ENCODE measurements at regions of chr7 and their contacts with region 1.

Region 1: GRCh38 chr7:103296901-103297836 is at the start of gene PMPCB:
- DNase-seq: peak; percentile 93 to 98 (median 96)
- ATAC-seq: peak; percentile 99
- H3K4me3 ChIP-seq: peak within 1 kb of the TSS; percentile 80
- H3K4me3 Mint-ChIP-seq: peak within 1 kb of the TSS; percentile 94
- H3K27ac ChIP-seq: peak within 1 kb of the TSS; percentile 80 to 87
- H3K27ac Mint-ChIP-seq: peak within 1 kb of the TSS; percentile 85
- H3K4me1 ChIP-seq: peaks cover 20% of the 10 kb centered on the region
- H3K4me1 Mint-ChIP-seq: peaks cover 42% of the 10 kb centered on the region
- H3K27me3 ChIP-seq: no peaks in the 10 kb centered on the region
- H3K27me3 Mint-ChIP-seq: no peaks in the 10 kb centered on the region
- CTCF ChIP-seq: peak; percentile 88
- total RNA-seq, gene PMPCB: 101 to 103 TPM

Region 2: GRCh38 chr7:103344453-103345149 is 47.4 kb after region 1 on chr7 and contains the start of gene DNAJC2:
- CTCF ChIA-PET with region 1: interaction called, 4 read pairs
- POLR2A ChIA-PET with region 1: interaction called, 6 read pairs
- intact Hi-C with region 1: loop called (anchors 1 to 2 kb)
- DNase-seq: peak; percentile 74 to 95 (median 78)
- ATAC-seq: peak; percentile 86
- H3K4me3 ChIP-seq: peak within 1 kb of the TSS; percentile 94
- H3K4me3 Mint-ChIP-seq: peak within 1 kb of the TSS; percentile 97
- H3K27ac ChIP-seq: peak within 1 kb of the TSS; percentile 73 to 82
- H3K27ac Mint-ChIP-seq: peak within 1 kb of the TSS; percentile 85
- H3K4me1 ChIP-seq: peaks cover 28% of the 10 kb centered on the region
- H3K4me1 Mint-ChIP-seq: peaks cover 76% of the 10 kb centered on the region
- H3K27me3 ChIP-seq: no peaks in the 10 kb centered on the region
- H3K27me3 Mint-ChIP-seq: no peaks in the 10 kb centered on the region
- CTCF ChIP-seq: no peak
- total RNA-seq, gene DNAJC2: 72.0 to 77.4 TPM

Region 3: DNA sequence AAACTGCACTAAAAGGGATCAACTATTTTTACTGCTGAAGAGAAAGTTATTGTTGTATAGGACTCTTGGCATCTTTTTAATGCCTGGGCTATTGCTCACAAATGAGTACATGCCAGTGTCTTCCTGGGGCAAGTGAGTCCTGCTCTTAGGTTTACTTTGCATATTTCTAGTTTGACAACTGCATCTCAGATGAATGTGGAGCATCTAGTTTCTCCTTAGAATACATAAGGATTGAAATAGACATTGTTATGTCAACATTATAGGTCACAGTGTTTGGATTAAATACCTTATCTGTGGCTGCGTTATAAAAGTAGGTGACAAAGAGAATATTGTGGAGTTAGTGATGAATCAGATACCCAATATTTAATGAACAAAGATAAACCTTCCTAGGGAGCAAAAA is 94.8 kb after region 1 on chr7:
- CTCF ChIA-PET with region 1: no interaction called
- POLR2A ChIA-PET with region 1: no interaction called
- intact Hi-C with region 1: no loop called
- DNase-seq: no peak
- ATAC-seq: no peak
- H3K4me3 ChIP-seq: no peak overlapping the region
- H3K4me3 Mint-ChIP-seq: no peak overlapping the region
- H3K27ac ChIP-seq: no peak overlapping the region
- H3K27ac Mint-ChIP-seq: no peak overlapping the region
- H3K4me1 ChIP-seq: no peaks in the 10 kb centered on the region
- H3K4me1 Mint-ChIP-seq: no peaks in the 10 kb centered on the region
- H3K27me3 ChIP-seq: peaks cover 3 to 4% of the 10 kb centered on the region in 2 experiments
- H3K27me3 Mint-ChIP-seq: peaks cover 12% of the 10 kb centered on the region
- CTCF ChIP-seq: no peak

Region 4: GRCh38 chr7:103412151-103412550 is 115.0 kb after region 1 on chr7:
- CTCF ChIA-PET with region 1: no interaction called
- POLR2A ChIA-PET with region 1: no interaction called
- intact Hi-C with region 1: loop called (anchors 1 to 2 kb)
- DNase-seq: no peak
- ATAC-seq: no peak
- H3K4me3 ChIP-seq: no peak overlapping the region
- H3K4me3 Mint-ChIP-seq: no peak overlapping the region
- H3K27ac ChIP-seq: no peak overlapping the region
- H3K27ac Mint-ChIP-seq: no peak overlapping the region
- H3K4me1 ChIP-seq: no peaks in the 10 kb centered on the region
- H3K4me1 Mint-ChIP-seq: no peaks in the 10 kb centered on the region
- H3K27me3 ChIP-seq: peaks cover 0 to 3% of the 10 kb centered on the region in 2 experiments
- H3K27me3 Mint-ChIP-seq: peaks cover 4% of the 10 kb centered on the region
- CTCF ChIP-seq: no peak

Region 5: GRCh38 chr7:104156842-104157277 is 859.7 kb after region 1 on chr7:
- CTCF ChIA-PET with region 1: no interaction called
- POLR2A ChIA-PET with region 1: no interaction called
- intact Hi-C with region 1: loop called (anchors 5 to 10 kb)
- DNase-seq: peak in 2 of 14 experiments; percentile 1 to 10
- ATAC-seq: no peak
- H3K4me3 ChIP-seq: no peak overlapping the region
- H3K4me3 Mint-ChIP-seq: no peak overlapping the region
- H3K27ac ChIP-seq: no peak overlapping the region
- H3K27ac Mint-ChIP-seq: no peak overlapping the region
- H3K4me1 ChIP-seq: no peaks in the 10 kb centered on the region
- H3K4me1 Mint-ChIP-seq: peaks cover 11% of the 10 kb centered on the region
- H3K27me3 ChIP-seq: no peaks in the 10 kb centered on the region
- H3K27me3 Mint-ChIP-seq: no peaks in the 10 kb centered on the region
- CTCF ChIP-seq: peak; percentile 54

Region 6: DNA sequence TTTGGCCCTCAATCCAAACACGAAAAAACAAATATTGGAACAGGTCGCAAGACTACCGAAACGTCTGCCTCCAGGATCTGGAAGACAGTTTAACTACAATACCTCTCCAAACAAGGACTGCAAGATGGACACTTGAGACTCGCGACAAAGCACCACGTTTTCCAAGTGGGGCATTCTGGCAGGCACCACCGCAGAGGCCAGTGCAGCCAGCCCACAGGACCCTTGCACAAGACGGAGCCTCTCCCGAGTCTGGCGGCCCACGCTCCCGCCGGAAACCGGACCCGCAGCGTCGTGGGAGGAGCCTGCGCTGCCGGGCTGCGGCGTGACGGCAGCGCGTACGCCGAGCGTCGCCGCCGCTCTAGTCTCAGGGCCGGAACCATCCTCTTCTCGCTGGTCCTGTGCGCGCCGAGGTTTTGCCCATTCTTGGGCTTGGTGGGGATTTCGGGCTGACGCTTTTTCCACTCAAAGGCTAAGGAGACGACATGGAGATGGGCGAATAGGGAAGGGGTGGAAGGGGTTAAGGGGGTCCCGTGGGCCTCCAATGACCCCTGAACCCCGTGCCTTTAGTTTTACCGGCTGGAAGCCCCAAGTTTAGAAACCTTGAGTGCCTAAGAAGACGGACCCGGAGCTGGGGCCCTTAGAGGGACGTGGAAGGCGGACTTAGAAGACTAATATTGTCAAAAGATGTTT is 910.7 kb after region 1 on chr7 and contains the start of gene ORC5:
- CTCF ChIA-PET with region 1: no interaction called
- POLR2A ChIA-PET with region 1: no interaction called
- intact Hi-C with region 1: loop called in 1 of 2 experiments (anchors 10 kb)
- DNase-seq: peak; percentile 53 to 89 (median 66)
- ATAC-seq: peak; percentile 97
- H3K4me3 ChIP-seq: peak within 1 kb of the TSS; percentile 92
- H3K4me3 Mint-ChIP-seq: peak within 1 kb of the TSS; percentile 97
- H3K27ac ChIP-seq: peak within 1 kb of the TSS; percentile 58 to 77
- H3K27ac Mint-ChIP-seq: peak within 1 kb of the TSS; percentile 94
- H3K4me1 ChIP-seq: peaks cover 20% of the 10 kb centered on the region
- H3K4me1 Mint-ChIP-seq: peaks cover 46% of the 10 kb centered on the region
- H3K27me3 ChIP-seq: no peaks in the 10 kb centered on the region
- H3K27me3 Mint-ChIP-seq: peaks cover 17% of the 10 kb centered on the region
- CTCF ChIP-seq: no peak
- total RNA-seq, gene ORC5: 7.7 to 9.3 TPM

Region 7: DNA sequence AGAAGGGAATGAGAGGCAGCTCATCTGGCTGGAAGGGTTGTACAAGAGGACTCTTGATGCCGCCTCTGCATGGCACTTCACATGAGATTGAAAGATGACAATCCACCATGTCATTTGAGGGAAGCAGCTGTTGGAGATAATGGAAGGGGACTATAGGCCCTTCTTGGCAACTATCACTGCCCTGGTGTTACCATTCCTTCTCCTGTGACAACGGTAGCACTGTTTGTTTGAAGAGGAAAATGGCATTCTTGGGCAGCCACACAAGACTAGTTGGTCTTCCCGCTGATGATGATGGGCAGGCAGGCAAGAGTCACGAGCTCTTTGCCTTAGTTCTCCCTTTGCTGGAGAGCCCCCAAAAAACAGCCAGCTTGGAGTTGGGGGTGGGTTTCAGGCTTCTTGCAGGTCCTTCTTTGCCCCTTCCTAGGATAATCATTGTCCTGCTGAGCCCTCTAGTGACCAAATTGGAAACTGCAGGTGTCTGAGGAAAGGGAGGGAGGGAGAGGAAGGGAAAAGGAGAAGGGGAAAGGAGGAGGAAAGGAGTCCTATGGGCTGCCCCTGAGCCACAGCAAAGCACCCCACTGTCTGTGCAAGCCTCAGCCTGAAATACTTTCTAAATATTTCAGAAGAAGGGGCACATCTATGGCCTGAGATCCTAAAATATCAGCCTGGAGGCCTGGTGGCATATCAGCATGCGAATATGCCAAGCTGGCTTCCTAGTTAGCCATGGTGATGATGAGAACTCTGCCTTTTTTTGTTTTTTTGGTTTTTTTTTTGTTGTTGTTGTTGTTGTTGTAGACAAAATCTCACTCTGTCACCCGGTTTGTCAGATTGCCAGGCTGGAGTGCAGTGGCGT is 1551.2 kb after region 1 on chr7:
- CTCF ChIA-PET with region 1: no interaction called
- POLR2A ChIA-PET with region 1: no interaction called
- intact Hi-C with region 1: loop called in 1 of 2 experiments (anchors 10 kb)
- DNase-seq: peak; percentile 7 to 67 (median 37)
- ATAC-seq: peak; percentile 34
- H3K4me3 ChIP-seq: no peak overlapping the region
- H3K4me3 Mint-ChIP-seq: no peak overlapping the region
- H3K27ac ChIP-seq: no peak overlapping the region
- H3K27ac Mint-ChIP-seq: no peak overlapping the region
- H3K4me1 ChIP-seq: no peaks in the 10 kb centered on the region
- H3K4me1 Mint-ChIP-seq: no peaks in the 10 kb centered on the region
- H3K27me3 ChIP-seq: no peaks in the 10 kb centered on the region
- H3K27me3 Mint-ChIP-seq: peaks cover 20% of the 10 kb centered on the region
- CTCF ChIP-seq: peak; percentile 86

Measured in CD4-positive, alpha-beta T cell (primary cell).